CD4-positive, alpha-beta memory T cell (primary cell): ENCODE measurements at regions of chr1 and their contacts with region 1.

Region 1: GRCh38 chr1:96966536-96967138 is 245.1 kb downstream of the PTBP2 start:
- DNase-seq: peak; percentile 57 to 70 (median 64)
- H3K4me3 ChIP-seq: no peak overlapping the region
- H3K4me3 Mint-ChIP-seq: peak overlapping the region in 1 of 8 donors; percentile 31
- H3K27ac ChIP-seq: no peak overlapping the region
- H3K27ac Mint-ChIP-seq: no peak overlapping the region
- H3K4me1 ChIP-seq: no peaks in the 10 kb centered on the region
- H3K4me1 Mint-ChIP-seq: no peaks in the 10 kb centered on the region
- H3K27me3 ChIP-seq: no peaks in the 10 kb centered on the region
- H3K27me3 Mint-ChIP-seq: peaks cover 10 to 35% of the 10 kb centered on the region in 2 donors

Region 2: DNA sequence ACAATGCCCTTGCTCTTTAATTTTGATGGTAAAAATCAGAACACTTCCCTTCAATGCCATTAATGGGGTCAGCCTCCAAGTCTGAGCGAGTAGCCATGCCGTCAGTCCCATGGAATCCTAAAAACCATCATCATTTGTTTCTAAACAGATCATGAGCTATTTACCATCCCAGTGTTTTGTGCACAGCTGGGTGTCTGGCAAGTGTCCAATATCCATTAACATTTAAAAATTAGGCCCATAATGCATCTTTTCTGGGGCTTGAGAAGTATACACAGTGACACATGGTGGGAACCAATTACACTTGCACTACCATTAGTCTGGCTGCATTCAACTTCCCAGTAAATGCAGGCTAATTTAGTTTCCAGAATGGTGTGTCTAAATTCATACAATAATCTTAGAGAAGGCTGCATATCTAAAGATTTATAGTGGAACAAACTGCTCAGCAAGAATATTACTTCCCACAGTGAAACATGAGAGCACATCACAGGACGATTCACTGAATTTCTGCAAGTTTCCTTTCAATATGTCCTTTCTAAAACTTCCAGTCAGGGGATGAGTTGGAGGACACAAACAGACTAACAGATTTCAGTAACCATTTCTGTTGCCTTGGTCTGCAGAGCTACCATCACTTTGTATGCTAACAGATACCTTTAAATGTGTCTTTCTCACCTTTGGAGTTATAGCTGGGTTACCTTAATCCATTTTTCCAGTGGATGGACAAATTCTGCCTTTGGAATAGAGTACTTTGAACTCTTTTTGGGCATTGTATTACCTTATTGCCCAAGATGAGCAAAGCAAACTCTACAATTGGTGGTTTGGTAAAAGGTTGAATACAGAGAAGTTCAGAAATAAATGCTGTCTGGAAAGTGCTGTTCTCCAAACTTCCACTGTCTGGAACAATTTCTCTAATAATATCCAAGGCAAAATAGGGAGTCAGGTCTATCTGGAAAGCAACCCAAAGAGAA is 12.9 kb after region 1 on chr1:
- CTCF ChIA-PET with region 1: interaction called, 10 read pairs
- POLR2A ChIA-PET with region 1: no interaction called
- intact Hi-C with region 1: no loop called
- DNase-seq: no peak
- H3K4me3 ChIP-seq: no peak overlapping the region
- H3K4me3 Mint-ChIP-seq: no peak overlapping the region
- H3K27ac ChIP-seq: no peak overlapping the region
- H3K27ac Mint-ChIP-seq: no peak overlapping the region
- H3K4me1 ChIP-seq: no peaks in the 10 kb centered on the region
- H3K4me1 Mint-ChIP-seq: no peaks in the 10 kb centered on the region
- H3K27me3 ChIP-seq: no peaks in the 10 kb centered on the region
- H3K27me3 Mint-ChIP-seq: peaks cover 3 to 6% of the 10 kb centered on the region in 2 donors

Region 3: GRCh38 chr1:97668945-97669344 is 702.3 kb after region 1 on chr1:
- CTCF ChIA-PET with region 1: no interaction called
- POLR2A ChIA-PET with region 1: no interaction called
- intact Hi-C with region 1: loop called (anchors 10 kb)
- DNase-seq: no peak
- H3K4me3 ChIP-seq: no peak overlapping the region
- H3K4me3 Mint-ChIP-seq: no peak overlapping the region
- H3K27ac ChIP-seq: no peak overlapping the region
- H3K27ac Mint-ChIP-seq: no peak overlapping the region
- H3K4me1 ChIP-seq: no peaks in the 10 kb centered on the region
- H3K4me1 Mint-ChIP-seq: no peaks in the 10 kb centered on the region
- H3K27me3 ChIP-seq: no peaks in the 10 kb centered on the region
- H3K27me3 Mint-ChIP-seq: no peaks in the 10 kb centered on the region

Region 4: GRCh38 chr1:97820470-97821188 is 854.0 kb after region 1 on chr1:
- CTCF ChIA-PET with region 1: no interaction called
- POLR2A ChIA-PET with region 1: no interaction called
- intact Hi-C with region 1: loop called (anchors 5 kb)
- DNase-seq: peak in 2 of 5 donors; percentile 6 to 12
- H3K4me3 ChIP-seq: no peak overlapping the region
- H3K4me3 Mint-ChIP-seq: no peak overlapping the region
- H3K27ac ChIP-seq: no peak overlapping the region
- H3K27ac Mint-ChIP-seq: no peak overlapping the region
- H3K4me1 ChIP-seq: no peaks in the 10 kb centered on the region
- H3K4me1 Mint-ChIP-seq: peaks cover 0 to 3% (median under 1%) of the 10 kb centered on the region in 4 donors
- H3K27me3 ChIP-seq: no peaks in the 10 kb centered on the region
- H3K27me3 Mint-ChIP-seq: no peaks in the 10 kb centered on the region

Region 5: DNA sequence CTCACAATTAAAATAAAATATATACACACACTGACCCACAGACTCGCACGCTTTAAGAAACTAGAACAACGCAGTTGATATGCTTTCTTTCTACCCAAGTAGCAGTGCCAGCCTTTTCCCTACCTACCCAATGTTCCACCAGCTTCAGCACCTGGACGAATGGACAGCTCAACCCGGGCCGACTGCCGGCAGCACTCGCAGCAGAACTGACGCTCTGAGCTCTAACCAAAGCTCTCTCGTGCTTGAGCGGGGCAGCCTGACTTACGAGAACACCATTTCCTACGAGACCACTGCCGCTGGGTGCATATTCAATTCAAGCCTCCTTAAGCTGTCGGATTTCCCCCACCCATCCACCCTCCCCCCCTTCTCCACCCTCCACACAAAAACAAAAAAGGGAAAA is 1081.6 kb after region 1 on chr1:
- CTCF ChIA-PET with region 1: interaction called, 74 read pairs
- POLR2A ChIA-PET with region 1: no interaction called
- intact Hi-C with region 1: loop called (anchors 1 kb)
- DNase-seq: peak; percentile 64 to 74 (median 71)
- H3K4me3 ChIP-seq: no peak overlapping the region
- H3K4me3 Mint-ChIP-seq: peak overlapping the region in 7 of 8 donors; percentile 13 to 67 (median 29)
- H3K27ac ChIP-seq: no peak overlapping the region
- H3K27ac Mint-ChIP-seq: peak overlapping the region in 2 of 7 donors; percentile 24 to 64
- H3K4me1 ChIP-seq: peaks cover 38% of the 10 kb centered on the region
- H3K4me1 Mint-ChIP-seq: peaks cover 27 to 48% (median 38%) of the 10 kb centered on the region in 4 donors
- H3K27me3 ChIP-seq: peaks cover 51% of the 10 kb centered on the region
- H3K27me3 Mint-ChIP-seq: peaks cover 60 to 69% of the 10 kb centered on the region in 2 donors